ENCODE measurements at regions of chr7 and their contacts with region 1.

Region 1: DNA sequence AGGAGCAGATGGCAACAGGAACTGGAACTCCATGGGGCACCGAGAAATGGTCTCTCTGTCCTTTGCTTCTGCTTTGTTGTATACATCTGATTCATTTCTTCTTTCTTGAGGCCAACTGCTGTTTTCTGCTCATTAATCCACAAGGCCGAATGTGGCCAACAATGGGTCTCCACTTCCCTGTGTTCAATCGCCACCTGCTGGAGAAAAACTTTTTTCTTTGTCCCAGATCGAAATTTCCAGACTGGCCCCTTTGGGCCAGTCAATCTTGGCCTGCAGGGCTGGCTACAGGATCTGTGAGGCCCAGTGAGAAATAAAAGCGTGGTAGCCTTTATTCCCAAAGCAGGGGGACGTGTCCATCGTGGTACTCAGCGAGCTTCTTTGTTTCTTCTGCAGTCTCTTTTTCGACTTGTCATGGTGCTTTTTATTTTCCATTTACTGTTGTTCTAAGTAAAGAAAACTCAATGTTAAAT is 58.8 kb downstream of the PARP12 start:
- DNase-seq: peak in 7 of 9 donors; percentile 17 to 42 (median 33)
- ATAC-seq: peak; percentile 37
- H3K4me3 ChIP-seq: no peak overlapping the region
- H3K4me3 Mint-ChIP-seq: no peak overlapping the region
- H3K27ac ChIP-seq: no peak overlapping the region
- H3K27ac Mint-ChIP-seq: peak overlapping the region in 1 of 9 donors; percentile 80
- H3K4me1 ChIP-seq: no peaks in the 10 kb centered on the region
- H3K4me1 Mint-ChIP-seq: peaks cover 0 to 6% (median 0%) of the 10 kb centered on the region in 7 donors
- H3K27me3 ChIP-seq: no peaks in the 10 kb centered on the region
- H3K27me3 Mint-ChIP-seq: no peaks in the 10 kb centered on the region

Region 2: GRCh38 chr7:139431010-139431409 is 572.9 kb before region 1 on chr7:
- CTCF ChIA-PET with region 1: no interaction called
- POLR2A ChIA-PET with region 1: no interaction called
- intact Hi-C with region 1: loop called in 1 of 2 experiments (anchors 5 kb)
- DNase-seq: no peak
- ATAC-seq: no peak
- H3K4me3 ChIP-seq: no peak overlapping the region
- H3K4me3 Mint-ChIP-seq: no peak overlapping the region
- H3K27ac ChIP-seq: no peak overlapping the region
- H3K27ac Mint-ChIP-seq: no peak overlapping the region
- H3K4me1 ChIP-seq: peaks cover 0 to 3% of the 10 kb centered on the region in 2 donors
- H3K4me1 Mint-ChIP-seq: peaks cover 6 to 18% (median 12%) of the 10 kb centered on the region in 7 donors
- H3K27me3 ChIP-seq: no peaks in the 10 kb centered on the region
- H3K27me3 Mint-ChIP-seq: no peaks in the 10 kb centered on the region

Region 3: DNA sequence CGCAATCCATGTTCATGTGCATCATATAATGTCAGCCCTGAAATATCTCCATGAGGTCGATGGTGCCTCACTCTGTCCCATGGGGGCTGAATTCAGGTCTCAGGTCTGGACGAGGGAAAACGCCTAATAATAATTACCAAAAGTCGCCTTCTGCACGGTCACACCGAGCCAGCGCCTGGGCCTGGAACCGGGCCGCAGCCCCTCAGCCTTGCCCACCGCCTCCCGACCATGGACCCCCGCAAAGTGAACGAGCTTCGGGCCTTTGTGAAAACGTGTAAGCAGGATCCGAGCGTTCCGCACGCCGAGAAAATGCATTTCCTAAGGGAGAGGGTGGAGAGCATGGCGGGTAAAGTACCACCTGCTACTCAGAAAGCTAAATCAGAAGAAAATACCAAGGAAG is 501.7 kb before region 1 on chr7:
- CTCF ChIA-PET with region 1: interaction called, 3 read pairs
- POLR2A ChIA-PET with region 1: no interaction called
- intact Hi-C with region 1: loop called (anchors 1 to 2 kb)
- DNase-seq: no peak
- ATAC-seq: no peak
- H3K4me3 ChIP-seq: no peak overlapping the region
- H3K4me3 Mint-ChIP-seq: no peak overlapping the region
- H3K27ac ChIP-seq: no peak overlapping the region
- H3K27ac Mint-ChIP-seq: no peak overlapping the region
- H3K4me1 ChIP-seq: no peaks in the 10 kb centered on the region
- H3K4me1 Mint-ChIP-seq: peaks cover 2 to 9% (median 5%) of the 10 kb centered on the region in 7 donors
- H3K27me3 ChIP-seq: no peaks in the 10 kb centered on the region
- H3K27me3 Mint-ChIP-seq: peaks cover 0 to 19% (median 5%) of the 10 kb centered on the region in 5 donors

Region 4: GRCh38 chr7:139602143-139602722 is 401.7 kb before region 1 on chr7:
- CTCF ChIA-PET with region 1: interaction called, 32 read pairs
- POLR2A ChIA-PET with region 1: no interaction called
- intact Hi-C with region 1: loop called (anchors 1 kb)
- DNase-seq: peak in 6 of 9 donors; percentile 16 to 46 (median 44)
- ATAC-seq: peak; percentile 73
- H3K4me3 ChIP-seq: no peak overlapping the region
- H3K4me3 Mint-ChIP-seq: no peak overlapping the region
- H3K27ac ChIP-seq: no peak overlapping the region
- H3K27ac Mint-ChIP-seq: no peak overlapping the region
- H3K4me1 ChIP-seq: no peaks in the 10 kb centered on the region
- H3K4me1 Mint-ChIP-seq: peaks cover 0 to 3% (median 0%) of the 10 kb centered on the region in 7 donors
- H3K27me3 ChIP-seq: no peaks in the 10 kb centered on the region
- H3K27me3 Mint-ChIP-seq: no peaks in the 10 kb centered on the region

Region 5: GRCh38 chr7:139610595-139610994 is 393.4 kb before region 1 on chr7:
- CTCF ChIA-PET with region 1: interaction called, 13 read pairs
- POLR2A ChIA-PET with region 1: no interaction called
- intact Hi-C with region 1: no loop called
- DNase-seq: no peak
- ATAC-seq: no peak
- H3K4me3 ChIP-seq: no peak overlapping the region
- H3K4me3 Mint-ChIP-seq: no peak overlapping the region
- H3K27ac ChIP-seq: no peak overlapping the region
- H3K27ac Mint-ChIP-seq: peak overlapping the region in 1 of 9 donors; percentile 40
- H3K4me1 ChIP-seq: no peaks in the 10 kb centered on the region
- H3K4me1 Mint-ChIP-seq: peaks cover 0 to 3% (median 0%) of the 10 kb centered on the region in 7 donors
- H3K27me3 ChIP-seq: no peaks in the 10 kb centered on the region
- H3K27me3 Mint-ChIP-seq: no peaks in the 10 kb centered on the region

Region 6: DNA sequence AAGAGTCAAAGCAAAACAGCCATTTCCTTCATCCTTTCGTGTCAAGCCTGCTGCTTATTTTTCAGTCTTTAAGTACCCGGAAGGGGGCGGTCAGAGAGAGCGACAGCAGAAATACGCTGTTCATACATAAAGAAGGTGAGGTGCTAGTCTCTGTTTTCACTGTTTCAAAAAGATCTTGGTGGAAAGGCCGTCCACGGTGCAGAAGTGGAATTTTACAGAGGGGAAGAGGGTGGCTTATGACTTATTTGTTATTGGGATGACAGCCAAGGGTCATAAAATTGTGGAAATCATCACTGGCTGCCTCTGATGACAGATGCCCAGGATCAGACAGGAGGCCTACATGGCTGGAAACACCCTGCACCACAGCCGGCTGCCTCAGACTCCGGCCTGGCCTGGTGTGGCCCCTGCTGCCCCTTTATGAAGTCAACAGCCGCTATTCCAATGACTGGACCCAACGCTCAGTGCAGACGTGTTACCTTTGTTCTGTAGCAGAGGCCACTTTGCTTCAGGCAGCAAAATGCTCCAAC is 283.2 kb before region 1 on chr7:
- CTCF ChIA-PET with region 1: no interaction called
- POLR2A ChIA-PET with region 1: no interaction called
- intact Hi-C with region 1: loop called in 1 of 2 experiments (anchors 5 kb)
- DNase-seq: peak in 4 of 9 donors; percentile 21 to 39 (median 22)
- ATAC-seq: peak; percentile 36
- H3K4me3 ChIP-seq: no peak overlapping the region
- H3K4me3 Mint-ChIP-seq: peak overlapping the region in 1 of 10 donors; percentile 27
- H3K27ac ChIP-seq: no peak overlapping the region
- H3K27ac Mint-ChIP-seq: no peak overlapping the region
- H3K4me1 ChIP-seq: peaks cover 0 to 13% of the 10 kb centered on the region in 2 donors
- H3K4me1 Mint-ChIP-seq: peaks cover 13 to 25% (median 18%) of the 10 kb centered on the region in 7 donors
- H3K27me3 ChIP-seq: no peaks in the 10 kb centered on the region
- H3K27me3 Mint-ChIP-seq: no peaks in the 10 kb centered on the region

Region 7: GRCh38 chr7:139976838-139977656 is 26.9 kb before region 1 on chr7:
- CTCF ChIA-PET with region 1: no interaction called
- POLR2A ChIA-PET with region 1: no interaction called
- intact Hi-C with region 1: no loop called
- DNase-seq: no peak
- ATAC-seq: no peak
- H3K4me3 ChIP-seq: no peak overlapping the region
- H3K4me3 Mint-ChIP-seq: no peak overlapping the region
- H3K27ac ChIP-seq: no peak overlapping the region
- H3K27ac Mint-ChIP-seq: no peak overlapping the region
- H3K4me1 ChIP-seq: peaks cover 9 to 10% of the 10 kb centered on the region in 2 donors
- H3K4me1 Mint-ChIP-seq: peaks cover 8 to 23% (median 18%) of the 10 kb centered on the region in 7 donors
- H3K27me3 ChIP-seq: no peaks in the 10 kb centered on the region
- H3K27me3 Mint-ChIP-seq: peaks cover 0 to 20% (median 0%) of the 10 kb centered on the region in 5 donors

Region 8: GRCh38 chr7:140059273-140060242 is 55.6 kb after region 1 on chr7:
- CTCF ChIA-PET with region 1: no interaction called
- POLR2A ChIA-PET with region 1: no interaction called
- intact Hi-C with region 1: no loop called
- DNase-seq: peak in 3 of 9 donors; percentile 20 to 45 (median 25)
- ATAC-seq: no peak
- H3K4me3 ChIP-seq: no peak overlapping the region
- H3K4me3 Mint-ChIP-seq: peak overlapping the region; percentile 67 to 94 (median 89)
- H3K27ac ChIP-seq: no peak overlapping the region
- H3K27ac Mint-ChIP-seq: peak overlapping the region; percentile 59 to 94 (median 86)
- H3K4me1 ChIP-seq: peaks cover 36 to 40% of the 10 kb centered on the region in 2 donors
- H3K4me1 Mint-ChIP-seq: peaks cover 44 to 82% (median 69%) of the 10 kb centered on the region in 7 donors
- H3K27me3 ChIP-seq: no peaks in the 10 kb centered on the region
- H3K27me3 Mint-ChIP-seq: no peaks in the 10 kb centered on the region